PC-9 (cell line): ENCODE measurements at regions of chr1 and their contacts with region 1.

Region 1: DNA sequence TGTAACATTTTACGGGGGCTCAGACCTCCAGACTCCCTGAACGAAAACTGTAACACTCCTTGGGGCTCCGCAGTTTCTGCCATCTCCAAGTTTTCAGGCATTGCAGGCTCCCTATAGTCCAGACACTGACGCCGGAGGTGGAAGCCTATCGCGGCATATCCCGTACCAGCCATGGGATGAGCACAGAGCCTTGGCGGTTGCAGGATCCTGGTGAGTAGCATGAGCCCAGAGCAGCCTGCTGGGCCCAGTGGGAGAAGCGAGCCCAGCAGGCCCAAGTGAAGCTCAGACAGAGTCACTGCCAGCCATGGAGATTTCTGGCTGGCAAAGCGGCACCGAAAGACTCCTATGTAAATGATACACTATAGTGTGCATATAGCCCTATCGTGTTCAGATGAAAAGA is 446.8 kb downstream of the COL11A1 start:
- DNase-seq: no peak
- H3K4me3 ChIP-seq: no peak overlapping the region
- H3K27ac ChIP-seq: no peak overlapping the region
- H3K4me1 ChIP-seq: no peaks in the 10 kb centered on the region
- H3K27me3 ChIP-seq: no peaks in the 10 kb centered on the region
- CTCF ChIP-seq: no peak

Region 2: DNA sequence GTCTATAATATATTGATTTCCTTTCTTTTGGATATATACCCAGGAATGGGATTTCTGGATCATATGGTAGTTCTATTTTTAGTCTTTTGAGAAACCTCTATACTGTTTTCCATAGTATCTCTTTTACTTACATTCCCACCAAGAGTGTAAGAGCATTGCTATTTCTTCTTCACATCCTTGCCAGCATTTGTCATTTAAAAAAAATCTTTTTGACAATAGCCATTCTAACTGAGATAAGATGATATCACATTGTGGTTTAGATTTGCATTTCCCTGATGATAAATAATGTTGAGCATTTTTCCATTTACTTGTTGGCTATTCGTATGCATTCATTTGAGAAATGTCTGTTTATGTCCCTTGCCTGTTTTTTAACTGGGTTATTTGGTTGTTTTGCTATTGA is 20.6 kb before region 1 on chr1:
- CTCF ChIA-PET with region 1: no interaction called
- POLR2A ChIA-PET with region 1: no interaction called
- intact Hi-C with region 1: loop called (anchors 1 kb)
- DNase-seq: no peak
- H3K4me3 ChIP-seq: no peak overlapping the region
- H3K27ac ChIP-seq: no peak overlapping the region
- H3K4me1 ChIP-seq: no peaks in the 10 kb centered on the region; the same call in 1 of the 2 replicates
- H3K27me3 ChIP-seq: no peaks in the 10 kb centered on the region
- CTCF ChIP-seq: no peak

Region 3: DNA sequence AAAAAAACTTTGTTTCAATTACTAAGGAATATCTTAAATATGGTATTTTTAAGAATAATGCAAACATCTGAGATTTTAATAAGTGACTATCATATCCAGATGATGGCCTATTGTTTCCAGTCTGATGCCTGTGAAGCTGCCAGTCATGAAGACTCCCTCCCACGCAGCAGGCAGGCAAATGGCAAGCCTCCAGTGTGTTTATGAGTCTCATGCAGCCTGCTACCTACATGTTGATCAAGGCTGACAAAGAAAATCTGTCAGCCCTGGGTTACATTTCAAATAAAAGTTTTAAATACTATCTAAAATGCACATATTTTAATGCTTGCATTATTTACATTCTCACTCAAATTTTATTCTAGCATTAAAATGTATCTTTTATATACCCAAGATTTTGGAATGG is 726.4 kb after region 1 on chr1:
- CTCF ChIA-PET with region 1: no interaction called
- POLR2A ChIA-PET with region 1: no interaction called
- intact Hi-C with region 1: no loop called
- DNase-seq: no peak
- H3K4me3 ChIP-seq: no peak overlapping the region
- H3K27ac ChIP-seq: no peak overlapping the region
- H3K4me1 ChIP-seq: no peaks in the 10 kb centered on the region
- H3K27me3 ChIP-seq: no peaks in the 10 kb centered on the region
- CTCF ChIP-seq: no peak